Panc1 (cell line): ENCODE measurements at regions of chr7 and their contacts with region 1.

Region 1: DNA sequence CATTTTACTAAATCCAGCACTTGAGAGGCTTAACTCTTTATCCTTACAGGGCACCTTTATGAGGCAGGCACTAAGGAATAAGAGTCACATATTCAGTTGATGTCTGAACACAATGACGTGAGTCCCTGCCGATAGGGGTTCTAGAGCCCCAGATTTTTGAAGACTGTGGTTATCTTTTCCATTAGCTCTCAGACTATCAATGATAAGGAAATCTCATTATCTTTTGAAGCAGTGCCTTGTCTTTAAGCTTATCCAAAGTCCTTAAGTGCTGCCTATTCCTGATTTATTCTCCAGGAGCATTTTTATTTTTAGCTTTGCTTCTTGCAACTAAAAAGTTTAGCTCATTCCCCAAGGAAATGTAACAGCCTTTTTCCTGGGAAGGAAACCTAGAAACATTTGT is 444.1 kb upstream of the LRRN3 start:
- DNase-seq: no peak
- ATAC-seq: no peak
- H3K4me3 ChIP-seq: no peak overlapping the region
- H3K27ac ChIP-seq: no peak overlapping the region
- H3K4me1 ChIP-seq: no peaks in the 10 kb centered on the region
- H3K27me3 ChIP-seq: no peaks in the 10 kb centered on the region
- CTCF ChIP-seq: no peak

Region 2: DNA sequence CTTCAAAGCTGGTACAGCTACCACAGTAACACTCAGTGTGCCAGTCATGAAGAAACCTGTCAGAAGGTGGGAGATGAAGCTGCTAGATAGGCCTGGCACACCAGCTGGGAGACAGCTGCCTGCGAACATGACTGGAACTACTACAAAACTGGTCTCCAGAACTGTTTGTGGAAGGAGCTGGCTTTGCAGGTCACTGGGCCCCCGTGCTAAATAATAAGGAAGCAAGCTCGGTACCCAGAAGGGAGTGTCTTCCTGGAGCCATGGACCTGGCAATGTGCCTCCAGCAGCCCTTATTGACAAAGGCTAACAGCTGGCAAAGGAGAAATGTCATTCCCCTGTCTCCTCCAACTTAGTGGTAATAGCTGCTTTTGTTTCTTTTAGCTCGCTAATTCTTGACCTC is 773.5 kb before region 1 on chr7:
- CTCF ChIA-PET with region 1: no interaction called
- POLR2A ChIA-PET with region 1: interaction called, 12 read pairs
- in situ Hi-C with region 1: no loop called
- intact Hi-C with region 1: no loop called
- DNase-seq: no peak
- ATAC-seq: no peak
- H3K4me3 ChIP-seq: no peak overlapping the region
- H3K27ac ChIP-seq: no peak overlapping the region
- H3K4me1 ChIP-seq: no peaks in the 10 kb centered on the region
- H3K27me3 ChIP-seq: no peaks in the 10 kb centered on the region
- CTCF ChIP-seq: no peak